ENCODE measurements at regions of chr2 and their contacts with region 1.

Region 1: GRCh38 chr2:237841051-237841450 is 18.4 kb upstream of the RAMP1 start:
- DNase-seq: no peak
- H3K4me3 ChIP-seq: no peak overlapping the region
- H3K27ac ChIP-seq: no peak overlapping the region
- H3K27me3 ChIP-seq: no peaks in the 10 kb centered on the region
- CTCF ChIP-seq: no peak

Region 2: GRCh38 chr2:237581751-237582746 is 259.0 kb before region 1 on chr2:
- intact Hi-C with region 1: loop called in 1 of 2 experiments (anchors 10 kb)
- DNase-seq: peak in 6 of 10 donors; percentile 28 to 63 (median 52)
- H3K4me3 ChIP-seq: peak overlapping the region in 28 of 59 donors; percentile 4 to 49 (median 32)
- H3K27ac ChIP-seq: peak overlapping the region in 16 of 59 donors; percentile 9 to 72 (median 36)
- H3K27me3 ChIP-seq: no peaks in the 10 kb centered on the region
- CTCF ChIP-seq: peak in 53 of 56 donors; percentile 20 to 67 (median 48)

Region 3: GRCh38 chr2:237859533-237860272 is 18.7 kb after region 1 on chr2 and contains the start of gene RAMP1:
- intact Hi-C with region 1: no loop called
- DNase-seq: peak in 3 of 10 donors; percentile 36 to 67 (median 41)
- H3K4me3 ChIP-seq: peak within 1 kb of the TSS; percentile 53 to 85 (median 71)
- H3K27ac ChIP-seq: peak within 1 kb of the TSS in 58 of 59 donors; percentile 27 to 93 (median 83)
- H3K27me3 ChIP-seq: peaks cover 0 to 2% (median 0%) of the 10 kb centered on the region in 45 donors
- CTCF ChIP-seq: peak in 3 of 56 donors; percentile 1 to 21 (median 3)
- total RNA-seq, gene RAMP1: 39.9 to 172 (median 76.2) TPM

Measured in dorsolateral prefrontal cortex (tissue), 120 donors.